Activated T-helper 2 cell treated with anti-CD3 and anti-CD28 coated beads, Interferon-gamma antibody, Interleukin-2, Interleukin-4, amounts not matched to agents 10 μg/mL and 5 μg/mL and 100 μg/mL, durations not matched to agents 14 hours and 24 hours and 36 hours (primary cell): ENCODE measurements at regions of chr18 and their contacts with region 1.

Region 1: DNA sequence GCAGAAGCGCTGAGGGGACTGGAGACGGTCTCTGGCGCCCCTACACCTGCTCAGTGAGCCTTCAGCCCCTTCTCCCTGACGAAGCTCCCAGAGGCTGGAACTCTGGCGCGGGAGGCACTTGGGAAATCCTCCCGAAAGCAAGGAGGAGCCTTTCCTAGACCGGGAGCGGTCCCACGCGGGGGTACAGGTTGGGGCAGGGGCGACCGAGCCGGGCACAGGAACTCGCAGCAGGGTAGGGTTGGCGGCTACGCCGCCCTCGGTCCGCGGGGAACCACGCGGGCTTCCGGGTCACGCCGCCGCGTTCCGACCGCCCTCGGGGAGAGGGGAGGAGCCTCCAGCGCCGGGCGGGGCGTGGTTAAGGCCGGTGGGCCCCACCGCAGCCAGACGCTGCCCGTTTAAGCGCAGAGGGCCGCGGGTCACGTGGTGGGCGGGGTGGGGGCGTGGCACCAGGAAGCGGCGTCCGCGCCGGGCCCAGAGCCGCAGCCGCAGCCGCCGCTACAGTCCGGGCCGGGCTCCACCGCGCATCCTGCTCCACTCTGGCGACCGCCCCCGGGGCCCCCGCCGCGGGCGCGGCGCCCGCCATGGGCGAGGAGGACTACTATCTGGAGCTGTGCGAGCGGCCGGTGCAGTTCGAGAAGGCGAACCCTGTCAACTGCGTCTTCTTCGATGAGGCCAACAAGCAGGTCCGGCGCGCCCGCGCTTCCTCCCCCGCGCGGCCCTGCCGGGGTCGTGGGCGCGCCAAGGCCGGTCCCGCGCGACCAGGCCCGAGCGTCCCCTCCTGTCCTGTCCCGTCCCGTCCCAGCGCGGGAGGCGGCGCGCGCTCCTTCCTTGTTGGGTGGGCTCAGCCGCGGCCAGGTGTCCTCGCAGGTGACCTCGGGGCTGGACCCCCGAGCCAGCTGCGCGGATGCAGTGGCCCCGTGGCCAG is at the start of gene RMC1:
- DNase-seq: peak; percentile 96
- H3K4me3 Mint-ChIP-seq: peak within 1 kb of the TSS; percentile 95
- H3K27ac Mint-ChIP-seq: peak within 1 kb of the TSS; percentile 85
- H3K4me1 Mint-ChIP-seq: peaks cover 44% of the 10 kb centered on the region
- H3K27me3 Mint-ChIP-seq: no peaks in the 10 kb centered on the region
- total RNA-seq, gene RMC1: 42.9 and 50.5 TPM in 2 replicates

Region 2: DNA sequence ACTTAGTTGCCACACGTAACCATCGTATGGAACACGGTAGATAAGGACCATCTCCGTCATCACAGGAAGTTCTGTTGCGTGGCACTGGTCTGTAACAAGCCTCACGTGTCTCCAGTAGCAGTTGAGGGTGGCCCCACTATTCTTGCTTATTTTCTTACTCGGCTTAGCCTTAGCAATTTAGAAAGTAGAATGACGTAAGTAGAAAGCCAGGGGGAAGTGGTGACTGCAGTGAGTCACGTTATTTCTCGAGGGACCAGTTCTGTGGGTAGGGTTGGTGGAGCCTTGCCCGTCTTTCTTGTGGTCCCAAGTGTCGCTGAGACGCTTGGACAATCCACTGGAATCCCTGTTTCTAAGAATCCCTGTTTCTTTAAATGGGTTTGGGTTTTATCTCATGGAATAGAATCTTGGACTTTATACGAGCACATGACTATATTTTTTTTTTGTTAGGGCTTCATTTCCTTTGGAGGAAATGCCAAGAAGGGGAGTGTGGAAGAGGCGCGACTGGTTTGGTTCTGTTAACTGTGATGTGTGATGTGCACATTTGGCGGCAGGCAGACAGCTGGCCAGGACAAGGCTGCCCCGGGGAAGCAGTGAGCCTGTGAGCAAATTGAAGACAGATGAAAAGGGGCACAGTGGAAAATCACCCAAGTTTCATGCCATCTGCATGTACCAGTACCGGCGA is 271.8 kb before region 1 on chr18:
- intact Hi-C with region 1: no loop called
- DNase-seq: peak; percentile 83
- H3K4me3 Mint-ChIP-seq: peak overlapping the region; percentile 69
- H3K27ac Mint-ChIP-seq: peak overlapping the region; percentile 98
- H3K4me1 Mint-ChIP-seq: peaks cover 70% of the 10 kb centered on the region
- H3K27me3 Mint-ChIP-seq: no peaks in the 10 kb centered on the region

Region 3: GRCh38 chr18:23452728-23453679 is 50.3 kb before region 1 on chr18 and contains the start of gene RIOK3:
- intact Hi-C with region 1: loop called (anchors 1 kb)
- DNase-seq: peak; percentile 92
- H3K4me3 Mint-ChIP-seq: peak within 1 kb of the TSS; percentile 92
- H3K27ac Mint-ChIP-seq: peak within 1 kb of the TSS; percentile 88
- H3K4me1 Mint-ChIP-seq: peaks cover 35% of the 10 kb centered on the region
- H3K27me3 Mint-ChIP-seq: peaks cover 6% of the 10 kb centered on the region
- total RNA-seq, gene RIOK3: 53.4 and 55.4 TPM in 2 replicates

Region 4: GRCh38 chr18:23515911-23516546 is 12.7 kb after region 1 on chr18:
- intact Hi-C with region 1: loop called (anchors 1 kb)
- DNase-seq: peak; percentile 69
- H3K4me3 Mint-ChIP-seq: no peak overlapping the region
- H3K27ac Mint-ChIP-seq: peak overlapping the region; percentile 62
- H3K4me1 Mint-ChIP-seq: peaks cover 13% of the 10 kb centered on the region
- H3K27me3 Mint-ChIP-seq: no peaks in the 10 kb centered on the region

Region 5: DNA sequence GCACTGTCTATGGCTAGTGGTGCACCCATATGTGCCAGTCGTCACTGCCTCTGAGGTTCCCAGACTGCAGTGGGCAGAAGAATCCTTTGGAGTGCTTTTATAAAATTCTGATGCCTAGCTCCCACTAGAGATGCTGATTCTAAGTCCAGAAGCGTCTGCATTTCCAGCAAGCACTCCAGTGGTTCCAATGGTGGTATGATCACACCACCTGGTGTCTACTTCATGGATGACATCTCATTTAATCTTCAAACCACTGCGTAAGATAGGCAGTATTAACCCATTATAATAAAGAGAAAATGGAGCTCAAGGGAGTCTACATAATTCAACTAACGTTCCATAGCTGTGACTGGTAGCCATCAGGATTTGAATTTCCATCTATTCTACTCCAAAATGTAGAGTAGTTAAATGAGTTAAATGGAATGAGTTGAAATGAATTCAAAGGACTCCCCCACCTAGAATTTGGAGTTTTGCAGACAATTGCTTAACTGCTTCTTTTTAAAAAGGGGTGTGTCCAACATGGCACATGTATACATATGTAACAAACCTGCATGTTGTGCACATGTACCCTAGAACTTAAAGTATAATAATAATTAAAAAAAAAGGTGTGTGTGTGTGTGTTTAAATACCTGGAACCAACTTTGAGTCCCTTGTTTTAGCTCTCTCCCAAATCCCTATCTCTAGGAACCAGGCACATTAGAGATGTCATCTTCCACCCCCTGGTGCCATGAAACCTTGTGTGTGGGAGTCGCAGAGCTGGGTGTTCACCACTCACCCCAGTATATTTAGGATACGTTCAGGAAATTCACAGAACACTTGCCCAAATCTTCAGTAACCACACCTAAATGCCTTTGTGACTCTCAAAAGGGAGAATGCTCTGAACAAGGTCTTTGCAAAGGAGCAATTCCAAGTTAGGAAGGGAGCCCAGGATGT is 200.0 kb after region 1 on chr18:
- intact Hi-C with region 1: loop called (anchors 1 kb)
- DNase-seq: no peak
- H3K4me3 Mint-ChIP-seq: no peak overlapping the region
- H3K27ac Mint-ChIP-seq: no peak overlapping the region
- H3K4me1 Mint-ChIP-seq: no peaks in the 10 kb centered on the region
- H3K27me3 Mint-ChIP-seq: peaks cover 54% of the 10 kb centered on the region

Region 6: GRCh38 chr18:23828426-23828825 is 325.1 kb after region 1 on chr18:
- intact Hi-C with region 1: loop called (anchors 5 kb)
- DNase-seq: peak; percentile 52
- H3K4me3 Mint-ChIP-seq: no peak overlapping the region
- H3K27ac Mint-ChIP-seq: peak overlapping the region; percentile 76
- H3K4me1 Mint-ChIP-seq: peaks cover 46% of the 10 kb centered on the region
- H3K27me3 Mint-ChIP-seq: no peaks in the 10 kb centered on the region

Region 7: DNA sequence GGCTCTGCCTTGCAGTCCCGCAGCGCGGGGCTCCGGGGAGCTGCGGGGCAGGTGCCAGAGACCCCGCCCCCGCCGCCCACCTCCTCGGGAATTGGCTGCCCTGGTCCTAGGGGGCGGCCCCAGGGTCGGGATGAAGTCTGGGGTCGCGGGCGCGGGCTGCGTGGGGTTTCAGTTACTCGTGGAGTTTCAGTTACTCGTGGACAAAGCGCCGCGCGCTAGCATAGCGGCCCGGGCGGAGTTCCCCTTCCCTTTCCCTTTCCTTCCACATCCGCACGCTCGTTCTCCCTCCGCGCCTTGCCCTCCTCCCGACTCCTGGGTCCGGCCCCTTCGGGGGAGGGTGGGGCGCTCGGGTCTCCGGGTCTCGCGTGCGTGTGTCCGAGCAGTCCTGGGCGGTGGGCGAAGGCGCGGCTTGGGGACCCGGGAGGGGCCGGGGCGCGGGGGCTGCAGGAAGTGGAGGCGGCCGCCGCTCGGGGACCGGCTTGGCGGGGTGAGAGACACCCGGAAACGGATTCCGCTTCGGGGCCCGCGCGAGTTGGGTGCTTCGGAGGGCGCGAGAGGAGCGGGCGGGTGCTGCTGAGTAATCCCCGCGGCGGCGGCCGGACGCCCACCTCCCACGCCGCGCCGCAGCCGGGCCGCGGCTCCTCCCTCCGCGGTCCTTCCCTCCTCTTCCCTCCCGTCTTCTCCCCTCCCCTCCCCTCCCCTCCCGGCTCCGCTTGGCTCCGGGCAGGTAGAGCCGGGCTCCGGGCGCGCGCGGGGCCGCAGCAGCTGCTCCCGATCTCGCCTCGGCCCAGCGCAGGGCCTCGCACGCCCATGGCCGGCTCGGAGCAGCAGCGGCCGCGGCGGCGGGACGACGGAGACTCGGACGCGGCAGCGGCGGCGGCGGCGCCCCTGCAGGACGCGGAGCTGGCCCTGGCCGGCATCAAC is 511.0 kb after region 1 on chr18 and contains the start of gene TTC39C:
- intact Hi-C with region 1: loop called (anchors 5 kb)
- DNase-seq: peak; percentile 80
- H3K4me3 Mint-ChIP-seq: peak within 1 kb of the TSS; percentile 92
- H3K27ac Mint-ChIP-seq: peak within 1 kb of the TSS; percentile 84
- H3K4me1 Mint-ChIP-seq: peaks cover 73% of the 10 kb centered on the region
- H3K27me3 Mint-ChIP-seq: no peaks in the 10 kb centered on the region
- total RNA-seq, gene TTC39C: 14.3 and 20.1 TPM in 2 replicates